ENCODE measurements at regions of chr3 and their contacts with region 1.

Region 1: DNA sequence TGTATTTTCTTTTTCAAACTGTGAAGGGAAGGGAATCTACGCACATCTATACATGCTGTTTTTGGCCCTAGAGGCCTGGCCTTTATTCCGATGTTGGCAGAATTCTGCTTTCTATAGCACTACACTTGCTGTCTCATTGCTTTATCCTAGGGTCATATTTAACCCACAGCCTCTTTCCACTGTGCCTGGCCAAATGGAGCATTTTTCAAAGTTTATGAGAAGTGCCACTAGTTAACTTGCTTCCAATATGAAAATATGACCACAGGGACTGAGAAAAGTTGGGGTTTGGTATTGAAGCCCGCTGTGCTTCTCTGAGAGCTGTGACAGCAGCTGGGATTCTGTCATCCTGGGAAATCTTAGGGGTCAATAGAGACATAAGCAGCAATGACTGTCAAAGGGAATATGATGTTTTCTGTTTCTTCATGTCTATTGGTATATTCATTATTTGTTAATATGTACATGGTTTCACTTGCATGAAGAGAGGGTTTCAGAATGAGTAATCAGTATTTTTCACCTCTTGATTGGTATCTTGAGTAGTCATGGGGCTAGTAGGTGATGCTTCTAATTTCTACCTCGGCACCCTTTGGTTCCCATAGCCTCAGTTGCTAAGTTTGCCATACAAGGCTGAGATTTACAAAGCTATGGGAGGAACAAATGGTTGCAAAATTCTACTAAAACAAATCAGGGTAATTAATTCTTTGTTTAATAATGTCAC is 275.8 kb upstream of the RBMS3 start:
- DNase-seq: no peak
- H3K4me3 ChIP-seq: no peak overlapping the region
- H3K27ac ChIP-seq: no peak overlapping the region
- H3K4me1 ChIP-seq: no peaks in the 10 kb centered on the region
- CTCF ChIP-seq: no peak

Region 2: GRCh38 chr3:28556195-28556594 is 448.8 kb before region 1 on chr3:
- CTCF ChIA-PET with region 1: no interaction called
- POLR2A ChIA-PET with region 1: interaction called, 10 read pairs
- intact Hi-C with region 1: no loop called
- DNase-seq: no peak
- H3K4me3 ChIP-seq: no peak overlapping the region
- H3K27ac ChIP-seq: no peak overlapping the region
- H3K4me1 ChIP-seq: no peaks in the 10 kb centered on the region
- CTCF ChIP-seq: no peak

Region 3: GRCh38 chr3:28816017-28816416 is 189.0 kb before region 1 on chr3:
- CTCF ChIA-PET with region 1: no interaction called
- POLR2A ChIA-PET with region 1: no interaction called
- intact Hi-C with region 1: no loop called
- DNase-seq: no peak
- H3K4me3 ChIP-seq: no peak overlapping the region
- H3K27ac ChIP-seq: no peak overlapping the region
- H3K4me1 ChIP-seq: no peaks in the 10 kb centered on the region
- CTCF ChIP-seq: no peak

Measured in OCI-LY7 (cell line).